ENCODE measurements at regions of chr7 and their contacts with region 1.

Region 1: DNA sequence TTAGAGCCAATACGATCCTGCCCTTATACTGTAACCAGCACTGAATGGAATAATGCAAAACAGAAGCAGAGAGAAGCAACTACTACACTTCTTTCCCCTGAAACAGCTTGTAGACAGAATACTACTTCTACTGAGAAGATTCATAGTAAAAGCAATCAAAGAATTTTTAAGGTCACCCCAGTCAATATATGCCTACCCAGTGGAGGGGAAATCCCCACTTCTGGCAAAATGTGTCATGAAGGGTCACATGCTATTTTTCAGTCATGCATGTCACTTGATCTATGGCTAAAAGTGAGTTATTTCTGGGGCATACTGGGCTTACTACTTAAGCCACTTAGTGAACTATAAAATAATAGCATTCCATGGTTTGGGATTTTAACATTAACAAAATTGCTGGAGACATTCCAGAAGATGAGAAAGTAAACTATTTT is 25.6 kb downstream of the IRF5 start:
- DNase-seq: no peak
- ATAC-seq: peak; percentile 91
- H3K4me3 Mint-ChIP-seq: peak overlapping the region; percentile 57
- H3K27ac Mint-ChIP-seq: peak overlapping the region; percentile 86
- H3K4me1 Mint-ChIP-seq: peaks cover 37% of the 10 kb centered on the region
- H3K27me3 Mint-ChIP-seq: no peaks in the 10 kb centered on the region
- CTCF ChIP-seq: no peak

Region 2: GRCh38 chr7:128904381-128905197 is 58.8 kb before region 1 on chr7:
- CTCF ChIA-PET with region 1: no interaction called
- POLR2A ChIA-PET with region 1: no interaction called
- intact Hi-C with region 1: loop called (anchors 1 kb)
- DNase-seq: no peak
- ATAC-seq: peak; percentile 90
- H3K4me3 Mint-ChIP-seq: no peak overlapping the region
- H3K27ac Mint-ChIP-seq: no peak overlapping the region
- H3K4me1 Mint-ChIP-seq: peaks cover 8% of the 10 kb centered on the region
- H3K27me3 Mint-ChIP-seq: peaks cover 7% of the 10 kb centered on the region
- CTCF ChIP-seq: no peak

Region 3: GRCh38 chr7:128909625-128910257 is 53.6 kb before region 1 on chr7:
- CTCF ChIA-PET with region 1: no interaction called
- POLR2A ChIA-PET with region 1: interaction called, 3 read pairs
- intact Hi-C with region 1: loop called (anchors 1 kb)
- DNase-seq: no peak
- ATAC-seq: no peak
- H3K4me3 Mint-ChIP-seq: peak overlapping the region; percentile 19
- H3K27ac Mint-ChIP-seq: no peak overlapping the region
- H3K4me1 Mint-ChIP-seq: peaks cover 18% of the 10 kb centered on the region
- H3K27me3 Mint-ChIP-seq: peaks cover 19% of the 10 kb centered on the region
- CTCF ChIP-seq: no peak

Region 4: DNA sequence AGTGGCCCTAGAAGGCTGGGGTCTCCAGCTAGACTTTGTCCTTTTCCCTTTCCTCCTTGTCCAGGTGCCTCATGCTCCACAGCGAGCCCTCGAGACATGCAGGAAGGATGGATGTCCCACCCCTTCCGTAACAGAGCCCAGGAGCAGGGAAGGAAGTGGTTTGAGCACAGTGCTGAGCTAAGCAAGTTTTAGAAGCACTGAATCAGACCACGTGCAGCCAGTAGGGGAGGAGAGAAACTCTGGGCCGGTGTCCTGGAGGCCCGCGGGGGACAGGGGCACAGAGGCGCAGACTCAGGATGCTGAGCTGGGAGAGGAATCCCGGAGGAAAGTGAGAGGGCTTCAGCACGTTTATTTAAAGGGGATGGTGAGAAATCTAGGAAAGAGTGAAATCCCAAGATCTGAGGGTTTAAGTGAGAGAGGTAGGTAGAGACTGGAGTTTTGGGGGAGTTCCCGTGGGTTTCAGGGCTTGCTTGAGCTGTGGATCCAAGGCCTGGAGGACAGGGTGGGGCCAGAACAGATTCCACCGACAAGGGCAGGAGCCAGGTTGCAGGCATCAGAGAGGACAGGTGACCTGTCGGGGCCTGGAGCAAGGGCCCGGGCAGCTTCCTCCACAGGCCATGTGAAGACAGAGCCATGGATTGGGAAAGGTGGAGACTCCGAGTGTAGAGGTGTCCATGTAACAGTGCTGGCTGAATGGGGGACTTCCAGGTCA is 30.0 kb before region 1 on chr7:
- CTCF ChIA-PET with region 1: no interaction called
- POLR2A ChIA-PET with region 1: interaction called, 11 read pairs
- intact Hi-C with region 1: no loop called
- DNase-seq: no peak
- ATAC-seq: peak; percentile 43
- H3K4me3 Mint-ChIP-seq: peak overlapping the region; percentile 79
- H3K27ac Mint-ChIP-seq: peak overlapping the region; percentile 92
- H3K4me1 Mint-ChIP-seq: peaks cover 47% of the 10 kb centered on the region
- H3K27me3 Mint-ChIP-seq: no peaks in the 10 kb centered on the region
- CTCF ChIP-seq: no peak

Region 5: DNA sequence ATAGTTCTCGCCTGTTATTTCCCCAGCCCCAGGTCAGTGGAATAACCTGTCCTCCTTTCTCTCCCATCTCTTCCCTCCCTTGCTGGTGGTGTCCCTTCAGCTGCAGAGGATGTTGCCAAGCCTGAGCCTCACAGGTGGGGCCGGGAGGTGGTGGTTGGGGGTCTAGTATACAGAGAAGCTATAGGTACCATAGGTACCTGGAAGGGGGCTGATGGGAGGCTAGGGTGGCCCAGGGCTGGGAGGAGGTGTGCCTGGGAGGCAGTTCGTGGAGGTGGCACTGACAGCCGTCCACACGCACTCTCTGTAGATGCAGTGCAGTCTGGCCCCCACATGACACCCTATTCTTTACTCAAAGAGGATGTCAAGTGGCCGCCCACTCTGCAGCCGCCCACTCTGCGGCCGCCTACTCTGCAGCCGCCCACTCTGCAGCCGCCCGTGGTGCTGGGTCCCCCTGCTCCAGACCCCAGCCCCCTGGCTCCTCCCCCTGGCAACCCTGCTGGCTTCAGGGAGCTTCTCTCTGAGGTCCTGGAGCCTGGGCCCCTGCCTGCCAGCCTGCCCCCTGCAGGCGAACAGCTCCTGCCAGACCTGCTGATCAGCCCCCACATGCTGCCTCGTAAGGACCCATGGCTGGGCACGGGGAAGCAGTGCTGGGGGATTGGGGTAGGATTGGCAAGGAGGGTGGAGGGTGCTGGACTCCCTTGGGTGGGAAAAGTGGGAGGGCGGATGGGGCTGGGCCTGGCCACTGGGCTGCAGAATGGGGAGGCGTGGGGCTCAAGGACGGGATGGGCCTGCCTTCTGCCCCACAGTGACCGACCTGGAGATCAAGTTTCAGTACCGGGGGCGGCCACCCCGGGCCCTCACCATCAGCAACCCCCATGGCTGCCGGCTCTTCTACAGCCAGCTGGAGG is 16.2 kb before region 1 on chr7:
- CTCF ChIA-PET with region 1: no interaction called
- POLR2A ChIA-PET with region 1: interaction called, 10 read pairs
- intact Hi-C with region 1: no loop called
- DNase-seq: no peak
- ATAC-seq: peak; percentile 45
- H3K4me3 Mint-ChIP-seq: no peak overlapping the region
- H3K27ac Mint-ChIP-seq: no peak overlapping the region
- H3K4me1 Mint-ChIP-seq: peaks cover 26% of the 10 kb centered on the region
- H3K27me3 Mint-ChIP-seq: no peaks in the 10 kb centered on the region
- CTCF ChIP-seq: no peak

Region 6: DNA sequence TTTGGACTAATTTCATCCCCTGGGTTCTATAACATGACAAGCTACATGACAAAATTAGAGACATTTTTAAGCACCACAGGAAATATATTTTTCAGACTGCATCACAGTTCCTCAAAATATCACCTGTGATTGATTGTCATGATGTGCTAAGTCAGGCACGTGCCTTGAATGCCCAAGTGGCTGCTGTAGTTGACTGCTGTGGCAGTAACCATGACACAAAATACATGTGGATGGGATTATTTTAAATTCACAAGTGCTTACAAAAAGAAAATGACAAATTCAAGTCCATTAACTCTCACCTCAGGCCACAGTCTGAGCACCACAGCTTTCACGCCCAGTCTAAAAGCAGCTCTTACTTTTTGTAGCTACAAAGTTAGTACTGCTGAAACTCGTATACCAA is 46.1 kb after region 1 on chr7:
- CTCF ChIA-PET with region 1: no interaction called
- POLR2A ChIA-PET with region 1: interaction called, 3 read pairs
- intact Hi-C with region 1: loop called (anchors 5 kb)
- DNase-seq: no peak
- ATAC-seq: peak; percentile 86
- H3K4me3 Mint-ChIP-seq: peak overlapping the region; percentile 17
- H3K27ac Mint-ChIP-seq: peak overlapping the region; percentile 82
- H3K4me1 Mint-ChIP-seq: peaks cover 43% of the 10 kb centered on the region
- H3K27me3 Mint-ChIP-seq: no peaks in the 10 kb centered on the region
- CTCF ChIP-seq: no peak